Psoas muscle (tissue), 8 donors: ENCODE measurements at regions of chr5 and their contacts with region 1.

Region 1: DNA sequence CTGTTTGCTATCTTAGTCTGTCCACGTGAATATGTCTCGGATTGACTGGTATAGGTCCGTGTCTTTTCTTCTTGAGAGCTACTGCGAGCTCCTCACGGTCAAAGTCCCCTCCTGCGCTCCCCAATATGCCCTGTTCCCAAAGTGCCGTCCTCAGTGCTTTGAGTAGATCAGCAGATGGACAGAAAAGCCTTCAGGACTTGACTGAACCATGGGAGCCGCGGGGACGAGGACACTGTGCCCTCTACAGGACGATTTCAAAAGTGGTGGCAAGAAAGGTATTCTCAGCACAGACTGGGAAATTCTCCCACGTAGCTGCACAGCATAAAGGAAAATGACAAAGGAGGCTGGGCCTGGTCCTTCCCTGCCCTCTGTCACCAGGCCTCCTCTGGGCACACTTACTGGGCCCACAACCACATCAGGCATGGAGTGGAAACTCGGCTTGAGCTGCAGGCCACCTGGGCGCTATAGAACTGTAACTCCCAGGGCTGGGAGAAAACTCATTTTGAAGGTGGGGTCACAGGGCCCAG is 16.6 kb upstream of the MTMR12 start:
- DNase-seq: peak; percentile 46 to 66
- ATAC-seq: peak; percentile 70 to 93 (median 84)
- H3K4me3 ChIP-seq: no peak overlapping the region
- H3K27ac ChIP-seq: no peak overlapping the region
- H3K4me1 ChIP-seq: peaks cover 9% of the 10 kb centered on the region
- H3K27me3 ChIP-seq: no peaks in the 10 kb centered on the region
- CTCF ChIP-seq: peak; percentile 68

Region 2: GRCh38 chr5:32206509-32207354 is 122.6 kb before region 1 on chr5:
- intact Hi-C with region 1: no loop called
- DNase-seq: no peak
- ATAC-seq: no peak
- H3K4me3 ChIP-seq: no peak overlapping the region
- H3K27ac ChIP-seq: no peak overlapping the region
- H3K4me1 ChIP-seq: no peaks in the 10 kb centered on the region
- H3K27me3 ChIP-seq: no peaks in the 10 kb centered on the region
- CTCF ChIP-seq: no peak

Region 3: GRCh38 chr5:32232441-32233219 is 96.7 kb before region 1 on chr5:
- intact Hi-C with region 1: loop called (anchors 1 to 2 kb)
- DNase-seq: peak; percentile 75 to 86
- ATAC-seq: peak; percentile 81 to 96 (median 89)
- H3K4me3 ChIP-seq: no peak overlapping the region
- H3K27ac ChIP-seq: no peak overlapping the region
- H3K4me1 ChIP-seq: peaks cover 12% of the 10 kb centered on the region
- H3K27me3 ChIP-seq: no peaks in the 10 kb centered on the region
- CTCF ChIP-seq: peak; percentile 82